ENCODE measurements at regions of chr19 and their contacts with region 1.

Region 1: DNA sequence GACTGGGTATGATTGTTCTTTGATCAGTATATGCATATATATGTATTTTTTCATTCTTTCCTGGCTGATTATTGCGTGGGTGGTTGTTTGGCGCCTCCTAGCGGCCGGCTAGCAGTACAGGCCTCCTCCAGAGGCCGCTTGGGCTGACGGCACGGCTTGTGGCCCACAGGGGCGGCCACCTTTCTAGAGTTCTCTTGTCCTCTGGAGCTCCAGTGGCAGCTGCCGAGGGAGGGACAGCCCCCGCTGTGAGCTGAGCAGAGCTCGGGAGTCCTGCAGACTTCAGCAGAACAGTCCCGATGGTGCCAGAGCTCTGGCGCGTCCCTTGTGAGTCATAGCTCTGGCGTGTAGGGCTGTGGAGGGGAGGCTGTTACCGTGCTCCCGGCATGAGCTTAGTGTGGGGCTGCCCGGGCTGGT is 22.5 kb upstream of the ZNF429 start:
- DNase-seq: peak; percentile 45
- H3K4me3 ChIP-seq: no peak overlapping the region
- H3K27ac ChIP-seq: no peak overlapping the region
- H3K4me1 ChIP-seq: no peaks in the 10 kb centered on the region
- H3K27me3 ChIP-seq: no peaks in the 10 kb centered on the region
- CTCF ChIP-seq: peak; percentile 64

Region 2: GRCh38 chr19:21202865-21203494 is 279.9 kb before region 1 on chr19:
- intact Hi-C with region 1: loop called (anchors 5 kb)
- DNase-seq: no peak
- H3K4me3 ChIP-seq: no peak overlapping the region
- H3K27ac ChIP-seq: no peak overlapping the region
- H3K4me1 ChIP-seq: no peaks in the 10 kb centered on the region
- H3K27me3 ChIP-seq: no peaks in the 10 kb centered on the region
- CTCF ChIP-seq: peak; percentile 24